PC-9 (cell line): ENCODE measurements at regions of chr11 and their contacts with region 1.

Region 1: DNA sequence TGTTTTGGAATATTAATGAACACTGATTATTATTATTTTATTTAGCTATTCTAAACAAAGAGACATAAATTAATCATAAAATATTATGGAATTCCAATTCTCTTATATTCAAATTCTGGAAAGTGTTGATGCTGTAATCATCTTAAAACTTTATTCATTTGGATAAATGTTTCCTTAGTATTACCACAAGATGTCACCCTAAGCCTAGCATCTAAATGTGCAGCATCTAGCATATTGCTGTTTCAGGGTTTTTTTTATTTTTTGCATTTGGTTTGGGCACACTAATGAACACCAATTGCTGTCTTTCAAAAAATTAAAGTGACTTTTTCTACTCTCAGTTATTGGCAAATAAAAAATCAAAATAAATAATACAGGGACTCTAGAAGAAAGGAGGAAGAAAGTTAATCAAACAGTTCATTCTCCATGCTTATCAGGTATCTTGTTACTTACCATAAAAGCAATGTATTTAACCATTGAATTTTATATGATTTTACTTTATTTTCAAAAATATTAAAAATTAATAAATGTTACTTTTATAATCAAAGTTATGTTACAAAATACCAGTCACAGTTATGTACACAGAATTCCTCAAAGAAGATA is 31.8 kb downstream of the DLG2 start:
- DNase-seq: peak in 1 of 2 experiments; percentile 51
- H3K4me3 ChIP-seq: no peak overlapping the region
- H3K27ac ChIP-seq: no peak overlapping the region
- H3K4me1 ChIP-seq: no peaks in the 10 kb centered on the region
- H3K27me3 ChIP-seq: no peaks in the 10 kb centered on the region
- CTCF ChIP-seq: peak; percentile 82

Region 2: DNA sequence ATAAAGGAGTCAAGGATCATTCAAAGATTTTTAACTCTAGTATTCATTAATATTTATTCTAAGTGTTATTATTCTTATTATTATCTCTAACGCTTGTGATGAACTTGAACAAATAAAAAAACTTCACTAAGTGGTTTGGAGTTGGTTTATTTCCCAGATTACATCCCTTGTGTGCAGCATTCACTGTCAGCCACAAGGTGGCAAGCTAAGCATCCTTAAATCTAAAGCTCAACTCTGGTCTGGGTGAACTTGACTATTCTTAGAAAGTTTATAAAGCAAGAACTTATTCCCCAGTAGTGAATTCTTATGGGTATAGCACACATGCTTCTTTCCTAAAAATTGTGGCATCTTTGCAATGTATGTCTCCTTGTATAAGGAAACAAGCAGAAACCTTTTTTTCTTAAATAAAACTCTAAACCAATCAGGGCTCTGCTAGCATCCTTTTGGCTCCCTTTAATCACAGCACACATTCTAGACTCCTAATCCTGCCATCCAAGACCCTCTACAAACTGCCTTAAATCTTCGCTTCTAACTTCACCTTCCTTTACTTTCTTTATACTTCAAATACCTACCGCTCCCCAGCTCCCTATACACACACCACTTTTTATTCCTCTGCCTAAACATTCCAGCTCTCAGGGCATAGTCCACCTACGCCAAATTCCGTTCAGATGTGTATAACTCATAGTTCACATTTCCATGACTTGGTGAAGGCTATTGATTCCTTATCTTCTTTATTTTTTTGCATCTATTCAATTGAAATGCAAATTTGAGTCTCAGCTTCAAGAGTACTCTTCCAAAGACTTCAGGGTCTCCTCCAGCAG is 1037.1 kb before region 1 on chr11:
- CTCF ChIA-PET with region 1: interaction called, 4 read pairs
- POLR2A ChIA-PET with region 1: no interaction called
- intact Hi-C with region 1: loop called (anchors 2 kb)
- DNase-seq: peak in 1 of 2 experiments; percentile 19
- H3K4me3 ChIP-seq: no peak overlapping the region
- H3K27ac ChIP-seq: no peak overlapping the region
- H3K4me1 ChIP-seq: no peaks in the 10 kb centered on the region
- H3K27me3 ChIP-seq: no peaks in the 10 kb centered on the region
- CTCF ChIP-seq: peak; percentile 89

Region 3: DNA sequence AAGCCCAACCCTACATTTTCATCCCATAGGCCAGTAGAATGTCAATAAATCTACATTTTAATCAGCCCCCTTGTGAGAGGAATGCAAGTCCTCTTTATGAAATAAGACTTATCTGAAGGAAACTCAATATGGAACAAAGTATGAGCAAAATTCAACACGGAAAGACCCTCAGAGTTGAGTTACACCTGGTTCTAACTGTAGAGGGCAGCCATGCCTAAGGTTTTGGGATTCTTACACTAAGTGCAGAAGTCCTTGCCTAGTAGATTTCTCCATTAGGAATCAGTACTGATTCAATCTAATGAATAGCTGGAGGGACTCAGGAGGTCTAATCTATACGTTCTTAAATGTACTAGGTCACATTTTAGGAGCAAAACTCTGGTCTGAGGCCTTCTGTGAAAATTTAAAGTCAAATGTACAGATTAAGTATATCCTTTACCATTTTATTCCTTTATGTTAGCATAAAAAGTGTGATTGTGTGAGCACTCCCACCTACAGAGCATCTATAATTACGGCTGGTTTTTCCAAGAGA is 872.7 kb before region 1 on chr11:
- CTCF ChIA-PET with region 1: no interaction called
- POLR2A ChIA-PET with region 1: no interaction called
- intact Hi-C with region 1: loop called (anchors 1 kb)
- DNase-seq: no peak
- H3K4me3 ChIP-seq: no peak overlapping the region
- H3K27ac ChIP-seq: no peak overlapping the region
- H3K4me1 ChIP-seq: no peaks in the 10 kb centered on the region
- H3K27me3 ChIP-seq: peaks cover 8% of the 10 kb centered on the region
- CTCF ChIP-seq: no peak

Region 4: GRCh38 chr11:84780689-84781293 is 814.6 kb before region 1 on chr11:
- CTCF ChIA-PET with region 1: no interaction called
- POLR2A ChIA-PET with region 1: no interaction called
- intact Hi-C with region 1: loop called (anchors 1 kb)
- DNase-seq: peak in 1 of 2 experiments; percentile 44
- H3K4me3 ChIP-seq: no peak overlapping the region
- H3K27ac ChIP-seq: no peak overlapping the region
- H3K4me1 ChIP-seq: no peaks in the 10 kb centered on the region
- H3K27me3 ChIP-seq: no peaks in the 10 kb centered on the region
- CTCF ChIP-seq: peak; percentile 76

Region 5: GRCh38 chr11:84800755-84801346 is 794.5 kb before region 1 on chr11:
- CTCF ChIA-PET with region 1: no interaction called
- POLR2A ChIA-PET with region 1: no interaction called
- intact Hi-C with region 1: loop called (anchors 5 kb)
- DNase-seq: peak; percentile 9 to 40
- H3K4me3 ChIP-seq: no peak overlapping the region
- H3K27ac ChIP-seq: no peak overlapping the region
- H3K4me1 ChIP-seq: no peaks in the 10 kb centered on the region
- H3K27me3 ChIP-seq: 0 out of 2 replicates have a peak, but pooled peaks cover 6% of the 10 kb centered on the region
- CTCF ChIP-seq: peak; percentile 71

Region 6: DNA sequence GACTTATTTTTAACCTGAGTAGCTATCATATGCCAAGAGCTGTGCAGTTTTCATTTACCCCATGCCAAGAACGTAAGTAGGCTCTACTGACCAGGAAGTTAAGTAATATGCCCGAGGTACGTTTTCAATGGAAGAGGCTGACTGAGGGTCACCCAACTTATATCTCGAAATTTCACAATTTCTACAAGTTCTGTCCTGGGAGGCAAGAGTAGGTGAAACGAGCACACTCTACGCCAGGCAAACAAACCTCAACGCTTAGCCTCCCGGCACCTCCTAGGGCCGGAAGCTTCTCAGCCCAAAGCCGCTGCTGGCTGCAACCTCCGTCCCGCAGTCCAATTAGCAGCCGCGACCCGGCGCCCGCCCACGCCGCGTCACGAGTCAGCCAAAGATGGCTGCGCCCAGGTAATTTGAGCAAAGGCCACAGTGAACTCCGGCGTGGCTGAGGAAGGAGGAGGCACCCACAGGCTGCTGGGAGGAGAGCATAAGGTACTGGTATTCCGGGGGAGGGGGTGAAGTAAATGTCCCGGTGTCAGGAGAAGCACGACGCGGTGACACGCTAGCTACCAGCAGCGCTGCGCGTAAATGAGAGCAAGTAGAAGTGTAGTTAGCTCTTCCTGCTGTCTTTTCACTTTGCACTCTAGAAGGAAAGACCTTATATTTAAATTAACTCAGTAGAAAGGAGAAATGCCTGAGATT is 52.4 kb after region 1 on chr11 and contains the start of gene TMEM126A:
- CTCF ChIA-PET with region 1: no interaction called
- POLR2A ChIA-PET with region 1: no interaction called
- intact Hi-C with region 1: no loop called
- DNase-seq: peak; percentile 90 to 95
- H3K4me3 ChIP-seq: peak within 1 kb of the TSS; percentile 72
- H3K27ac ChIP-seq: peak within 1 kb of the TSS; percentile 76
- H3K4me1 ChIP-seq: peaks cover 24% of the 10 kb centered on the region
- H3K27me3 ChIP-seq: no peaks in the 10 kb centered on the region
- CTCF ChIP-seq: no peak
- total RNA-seq, gene TMEM126A: 17.7 and 26.3 TPM in 2 replicates

Region 7: GRCh38 chr11:86291466-86292262 is 696.3 kb after region 1 on chr11:
- CTCF ChIA-PET with region 1: interaction called, 20 read pairs
- POLR2A ChIA-PET with region 1: no interaction called
- intact Hi-C with region 1: loop called (anchors 5 kb)
- DNase-seq: peak; percentile 41 to 60
- H3K4me3 ChIP-seq: no peak overlapping the region
- H3K27ac ChIP-seq: no peak overlapping the region
- H3K4me1 ChIP-seq: no peaks in the 10 kb centered on the region
- H3K27me3 ChIP-seq: no peaks in the 10 kb centered on the region
- CTCF ChIP-seq: peak; percentile 95